Activated T-helper 1 cell treated with anti-CD3 and anti-CD28 coated beads, Interleukin-12 subunit alpha, Interleukin-12 subunit beta, Interleukin-2, Interleukin-4 antibody, amounts not matched to agents 30 ng/mL and 10 ng/mL and 1 ng/mL, durations not matched to agents 14 hours and 24 hours and 36 hours (primary cell): ENCODE measurements at regions of chr11 and their contacts with region 1.

Region 1: DNA sequence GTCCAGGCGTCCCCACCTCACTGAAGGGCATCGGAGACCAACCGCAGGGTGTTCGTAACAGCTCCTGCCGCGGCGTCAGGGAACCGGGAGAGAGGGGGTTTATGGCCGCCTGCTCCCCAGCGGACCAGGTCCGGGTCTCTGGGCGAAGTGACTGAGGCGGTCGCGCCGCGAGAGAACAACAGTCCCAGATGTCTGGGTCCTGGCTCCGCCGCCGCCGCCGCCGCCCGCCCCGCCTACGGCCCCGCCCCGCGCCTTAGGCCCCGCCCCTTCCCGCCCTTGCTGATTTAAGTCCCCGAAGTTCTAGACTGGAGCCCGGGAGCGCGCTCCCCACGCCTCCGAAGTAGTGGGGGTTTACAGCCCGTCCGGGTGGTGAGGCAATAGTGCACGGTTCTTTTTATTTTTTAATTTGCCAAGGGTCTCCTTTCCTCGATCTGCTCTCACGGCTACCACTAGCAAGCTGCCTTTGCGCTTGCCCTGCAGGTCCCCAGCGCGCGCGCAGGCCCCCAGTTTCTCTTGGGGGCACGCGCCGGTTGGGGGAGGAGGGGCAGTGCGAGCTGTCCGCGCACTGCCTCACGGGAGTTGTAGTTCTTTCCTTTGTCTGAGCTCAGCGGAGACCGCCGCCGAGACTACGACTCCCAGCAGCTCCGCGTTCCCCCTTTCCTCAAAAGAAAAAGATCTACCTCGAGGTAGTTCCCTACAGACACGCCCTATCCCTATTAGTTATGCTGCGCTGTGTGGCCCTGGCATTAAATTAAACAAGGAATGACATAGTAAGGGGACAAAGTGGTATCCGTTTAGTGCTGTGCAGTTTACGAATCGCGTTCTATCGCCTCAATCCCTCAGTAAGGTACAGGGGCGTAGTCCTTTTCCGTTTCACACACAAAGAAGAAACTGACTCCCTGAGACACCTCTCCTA is at the start of gene PGM2L1:
- DNase-seq: peak; percentile 88
- H3K4me3 Mint-ChIP-seq: peak within 1 kb of the TSS; percentile 96
- H3K27ac Mint-ChIP-seq: peak within 1 kb of the TSS; percentile 99
- H3K4me1 Mint-ChIP-seq: peaks cover 36% of the 10 kb centered on the region
- H3K27me3 Mint-ChIP-seq: peaks cover 2% of the 10 kb centered on the region
- total RNA-seq, gene PGM2L1: 4.0 and 4.5 TPM in 2 replicates

Region 2: GRCh38 chr11:73597956-73598718 is 800.4 kb before region 1 on chr11 and contains the start of gene FAM168A:
- intact Hi-C with region 1: loop called (anchors 2 kb)
- DNase-seq: peak; percentile 88
- H3K4me3 Mint-ChIP-seq: peak within 1 kb of the TSS; percentile 93
- H3K27ac Mint-ChIP-seq: peak within 1 kb of the TSS; percentile 94
- H3K4me1 Mint-ChIP-seq: peaks cover 37% of the 10 kb centered on the region
- H3K27me3 Mint-ChIP-seq: peaks cover 2% of the 10 kb centered on the region
- total RNA-seq, gene FAM168A: 19.4 and 19.5 TPM in 2 replicates

Region 3: DNA sequence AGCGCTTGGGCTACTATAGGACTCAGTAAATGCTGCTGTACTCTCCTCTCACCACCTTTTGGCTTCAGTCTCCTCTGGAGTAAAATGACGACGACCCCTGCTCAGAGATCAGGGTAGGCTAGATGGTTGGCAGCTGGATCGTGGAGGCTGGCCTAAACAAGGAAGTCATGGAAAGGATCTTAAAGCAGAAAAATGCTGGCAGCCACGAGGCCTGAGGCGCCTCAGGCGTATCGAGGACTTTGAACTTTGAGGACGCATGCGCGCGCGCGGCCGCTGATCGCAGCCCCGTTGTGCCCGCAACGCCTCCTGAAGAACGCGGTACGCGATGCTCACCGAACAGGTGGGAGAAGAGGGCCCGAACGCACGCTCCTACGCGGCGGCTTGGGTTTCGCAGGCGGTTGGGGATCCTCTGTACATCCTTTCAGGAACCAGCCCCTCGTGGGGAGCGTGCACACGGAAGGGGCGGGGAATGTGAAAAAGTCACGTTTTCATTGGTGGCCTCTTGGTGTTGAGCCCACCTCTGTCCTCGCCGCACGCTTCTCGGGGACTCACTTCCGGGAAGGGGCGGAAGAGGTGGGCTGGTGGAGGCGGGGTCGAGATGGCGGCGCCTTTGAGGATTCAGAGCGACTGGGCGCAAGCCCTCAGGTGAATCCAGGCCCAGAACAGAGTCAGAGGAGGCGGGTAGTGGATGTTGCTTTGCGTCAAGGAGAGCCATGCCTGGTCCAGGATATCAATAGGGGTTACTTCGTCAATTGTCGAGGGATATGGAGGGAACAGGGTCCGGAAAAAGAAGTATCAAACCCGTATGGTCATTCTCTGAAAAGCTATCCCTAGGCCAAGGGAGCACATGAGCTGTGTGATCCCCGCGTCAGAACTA is 521.8 kb before region 1 on chr11 and contains the starts of genes COA4 and PAAF1:
- intact Hi-C with region 1: loop called (anchors 2 kb)
- DNase-seq: peak; percentile 92
- H3K4me3 Mint-ChIP-seq: peak within 1 kb of the TSS; percentile 93
- H3K27ac Mint-ChIP-seq: peak within 1 kb of the TSS; percentile 100
- H3K4me1 Mint-ChIP-seq: peaks cover 30% of the 10 kb centered on the region
- H3K27me3 Mint-ChIP-seq: no peaks in the 10 kb centered on the region
- total RNA-seq, gene COA4: 99.1 and 102 TPM in 2 replicates
- total RNA-seq, gene PAAF1: 22.4 and 25.0 TPM in 2 replicates

Region 4: DNA sequence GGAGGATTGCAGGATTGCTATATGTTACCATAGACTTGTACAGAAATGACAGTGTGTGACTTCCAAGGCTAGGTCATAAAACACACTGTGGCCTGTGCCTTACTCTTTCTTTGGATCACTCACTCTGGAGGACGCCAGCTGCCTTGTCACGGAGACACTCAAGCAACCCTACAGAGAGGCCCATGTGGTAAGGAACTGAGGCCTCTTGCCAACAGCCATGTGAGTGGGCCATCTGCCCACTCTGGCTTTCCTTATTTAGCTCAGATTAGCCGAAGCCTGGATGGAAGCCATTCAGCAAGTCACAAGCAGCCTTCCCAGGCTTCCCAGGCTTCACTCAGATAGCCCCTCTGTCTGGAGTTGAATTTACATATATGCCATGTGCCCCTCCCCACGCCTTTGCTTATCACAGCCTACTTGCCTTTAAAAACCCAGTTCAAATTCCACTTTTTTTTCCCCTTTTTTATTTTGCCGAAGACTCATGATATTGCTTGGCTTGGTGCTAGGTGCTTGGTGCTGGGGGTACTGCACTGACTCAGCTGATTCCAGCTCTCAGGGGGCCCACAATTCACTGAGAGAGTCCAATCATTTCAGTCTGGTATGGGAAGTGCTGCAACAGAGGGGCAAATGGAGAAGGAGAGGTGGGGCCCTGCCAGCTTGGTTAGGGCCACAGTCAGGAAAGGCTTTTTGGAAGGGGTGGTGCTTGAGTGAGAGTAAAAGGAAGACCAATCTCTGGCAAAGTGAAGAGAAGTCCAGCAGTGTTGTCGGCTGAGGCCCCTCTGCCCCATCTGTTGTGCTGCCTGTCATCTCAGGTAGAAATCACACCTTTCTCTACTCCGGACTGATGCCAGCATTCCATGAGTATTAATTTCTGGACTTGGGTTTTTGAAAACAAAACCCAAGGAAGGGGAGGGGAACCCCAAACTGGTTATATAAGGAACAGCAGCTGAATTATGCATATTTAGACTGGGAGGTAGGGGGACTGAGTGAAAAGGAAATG is 72.6 kb before region 1 on chr11:
- intact Hi-C with region 1: no loop called
- DNase-seq: no peak
- H3K4me3 Mint-ChIP-seq: no peak overlapping the region
- H3K27ac Mint-ChIP-seq: no peak overlapping the region
- H3K4me1 Mint-ChIP-seq: no peaks in the 10 kb centered on the region
- H3K27me3 Mint-ChIP-seq: peaks cover 10% of the 10 kb centered on the region

Region 5: DNA sequence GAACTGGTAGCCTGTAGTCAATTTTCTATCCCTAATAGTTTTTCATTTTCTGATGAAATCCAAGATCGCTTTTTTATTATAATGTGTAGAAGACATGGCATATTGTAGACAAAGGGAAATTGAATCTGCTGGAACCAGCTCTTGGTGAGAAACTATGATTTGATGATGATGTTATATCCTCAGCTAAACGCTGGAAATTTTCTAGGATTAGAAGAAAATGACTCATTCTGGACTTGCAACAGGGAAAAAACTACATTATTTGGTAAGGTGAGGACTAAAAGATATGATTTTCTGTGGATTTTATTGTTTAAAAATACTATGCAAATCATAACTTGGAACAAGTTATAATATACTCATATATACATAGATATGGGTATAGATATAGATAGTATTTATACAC is 13.8 kb after region 1 on chr11:
- intact Hi-C with region 1: loop called (anchors 1 kb)
- DNase-seq: no peak
- H3K4me3 Mint-ChIP-seq: no peak overlapping the region
- H3K27ac Mint-ChIP-seq: no peak overlapping the region
- H3K4me1 Mint-ChIP-seq: peaks cover 11% of the 10 kb centered on the region
- H3K27me3 Mint-ChIP-seq: peaks cover 5% of the 10 kb centered on the region

Region 6: DNA sequence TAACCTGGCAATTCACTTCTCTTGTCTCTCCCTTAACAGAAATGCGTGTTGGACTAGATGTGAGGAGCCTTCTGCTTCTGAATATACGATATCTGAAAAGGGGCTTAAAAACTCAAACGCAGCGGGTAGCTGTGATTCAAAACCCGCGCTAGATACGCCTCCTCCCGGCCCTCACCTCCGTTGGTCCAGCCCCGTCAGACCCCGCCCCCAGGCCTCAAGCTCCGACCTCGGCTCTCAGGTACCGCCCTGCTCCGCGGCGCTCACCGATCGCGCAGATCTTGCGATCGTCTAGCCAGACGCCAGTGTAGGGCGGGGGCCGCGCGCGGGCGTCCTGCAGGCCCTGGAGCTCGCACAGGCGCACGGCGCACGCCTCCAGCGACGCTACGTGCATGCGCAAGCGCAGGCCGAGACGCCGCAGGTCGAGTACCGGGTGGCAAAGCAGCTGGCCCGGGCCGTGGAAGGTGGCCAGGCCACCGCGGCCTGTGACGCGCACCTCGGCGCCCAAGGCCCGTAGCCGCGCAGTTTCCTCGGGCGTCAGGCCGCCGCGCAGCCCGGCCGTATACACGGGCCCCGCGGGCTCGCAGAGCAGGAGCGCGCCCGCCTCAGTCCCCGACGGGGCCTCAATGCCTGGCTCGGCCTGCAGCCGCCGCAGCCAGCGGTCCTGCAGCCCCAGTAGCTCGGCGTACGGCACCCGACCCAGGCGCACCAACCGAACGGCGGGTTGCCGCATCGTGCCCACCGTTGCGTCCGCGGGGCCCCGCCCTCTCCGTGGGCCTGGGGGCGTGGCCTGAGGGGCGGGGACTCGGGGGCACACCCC is 94.7 kb after region 1 on chr11 and contains the start of gene LIPT2:
- intact Hi-C with region 1: loop called (anchors 1 kb)
- DNase-seq: peak; percentile 96
- H3K4me3 Mint-ChIP-seq: peak within 1 kb of the TSS; percentile 86
- H3K27ac Mint-ChIP-seq: peak within 1 kb of the TSS; percentile 83
- H3K4me1 Mint-ChIP-seq: peaks cover 21% of the 10 kb centered on the region
- H3K27me3 Mint-ChIP-seq: peaks cover 8% of the 10 kb centered on the region
- total RNA-seq, gene LIPT2: 2.7 and 3.4 TPM in 2 replicates

Region 7: GRCh38 chr11:74948898-74949747 is 550.6 kb after region 1 on chr11 and contains the starts of genes SPCS2 and XRRA1:
- intact Hi-C with region 1: loop called (anchors 10 kb)
- DNase-seq: peak; percentile 98
- H3K4me3 Mint-ChIP-seq: peak within 1 kb of the TSS; percentile 96
- H3K27ac Mint-ChIP-seq: peak within 1 kb of the TSS; percentile 96
- H3K4me1 Mint-ChIP-seq: peaks cover 46% of the 10 kb centered on the region
- H3K27me3 Mint-ChIP-seq: no peaks in the 10 kb centered on the region
- total RNA-seq, gene SPCS2: 167 and 172 TPM in 2 replicates
- total RNA-seq, gene XRRA1: 8.6 and 9.0 TPM in 2 replicates